CD4-positive, alpha-beta T cell (primary cell): ENCODE measurements at regions of chr7 and their contacts with region 1.

Region 1: GRCh38 chr7:131057015-131057793 is 270.5 kb upstream of the MKLN1 start:
- DNase-seq: peak in 3 of 14 experiments; percentile 75 to 88 (median 79)
- ATAC-seq: peak; percentile 54
- H3K4me3 ChIP-seq: peak overlapping the region; percentile 32
- H3K4me3 Mint-ChIP-seq: peak overlapping the region; percentile 88
- H3K27ac ChIP-seq: peak overlapping the region; percentile 72 to 80
- H3K27ac Mint-ChIP-seq: peak overlapping the region; percentile 95
- H3K4me1 ChIP-seq: peaks cover 86% of the 10 kb centered on the region
- H3K4me1 Mint-ChIP-seq: peaks cover 86% of the 10 kb centered on the region
- H3K27me3 ChIP-seq: no peaks in the 10 kb centered on the region
- H3K27me3 Mint-ChIP-seq: no peaks in the 10 kb centered on the region
- CTCF ChIP-seq: no peak

Region 2: GRCh38 chr7:131040467-131040932 is 16.7 kb before region 1 on chr7:
- CTCF ChIA-PET with region 1: interaction called, 6 read pairs
- POLR2A ChIA-PET with region 1: interaction called, 10 read pairs
- intact Hi-C with region 1: loop called in 1 of 2 experiments (anchors 1 kb)
- DNase-seq: peak in 6 of 14 experiments; percentile 31 to 81 (median 65)
- ATAC-seq: peak; percentile 58
- H3K4me3 ChIP-seq: no peak overlapping the region
- H3K4me3 Mint-ChIP-seq: peak overlapping the region; percentile 47
- H3K27ac ChIP-seq: no peak overlapping the region
- H3K27ac Mint-ChIP-seq: peak overlapping the region; percentile 72
- H3K4me1 ChIP-seq: peaks cover 23% of the 10 kb centered on the region
- H3K4me1 Mint-ChIP-seq: peaks cover 80% of the 10 kb centered on the region
- H3K27me3 ChIP-seq: no peaks in the 10 kb centered on the region
- H3K27me3 Mint-ChIP-seq: no peaks in the 10 kb centered on the region
- CTCF ChIP-seq: peak; percentile 95

Region 3: GRCh38 chr7:131045526-131045925 is 11.7 kb before region 1 on chr7:
- CTCF ChIA-PET with region 1: interaction called, 6 read pairs
- POLR2A ChIA-PET with region 1: interaction called, 10 read pairs
- intact Hi-C with region 1: loop called in 1 of 2 experiments (anchors 1 kb)
- DNase-seq: no peak
- ATAC-seq: no peak
- H3K4me3 ChIP-seq: no peak overlapping the region
- H3K4me3 Mint-ChIP-seq: peak overlapping the region; percentile 6
- H3K27ac ChIP-seq: no peak overlapping the region
- H3K27ac Mint-ChIP-seq: peak overlapping the region; percentile 63
- H3K4me1 ChIP-seq: peaks cover 39% of the 10 kb centered on the region
- H3K4me1 Mint-ChIP-seq: peaks cover 82% of the 10 kb centered on the region
- H3K27me3 ChIP-seq: no peaks in the 10 kb centered on the region
- H3K27me3 Mint-ChIP-seq: no peaks in the 10 kb centered on the region
- CTCF ChIP-seq: no peak